ENCODE measurements at regions of chr18 and their contacts with region 1.

Region 1: GRCh38 chr18:36572135-36572856 is 256.5 kb downstream of the TPGS2 start:
- DNase-seq: peak in 1 of 2 donors; percentile 76
- H3K4me3 ChIP-seq: no peak overlapping the region
- H3K27ac ChIP-seq: peak overlapping the region in 1 of 2 donors; percentile 16
- H3K4me1 ChIP-seq: peaks cover 0 to 5% (median 0%) of the 10 kb centered on the region in 4 donors
- H3K27me3 ChIP-seq: no peaks in the 10 kb centered on the region
- CTCF ChIP-seq: peak; percentile 53 to 58

Region 2: DNA sequence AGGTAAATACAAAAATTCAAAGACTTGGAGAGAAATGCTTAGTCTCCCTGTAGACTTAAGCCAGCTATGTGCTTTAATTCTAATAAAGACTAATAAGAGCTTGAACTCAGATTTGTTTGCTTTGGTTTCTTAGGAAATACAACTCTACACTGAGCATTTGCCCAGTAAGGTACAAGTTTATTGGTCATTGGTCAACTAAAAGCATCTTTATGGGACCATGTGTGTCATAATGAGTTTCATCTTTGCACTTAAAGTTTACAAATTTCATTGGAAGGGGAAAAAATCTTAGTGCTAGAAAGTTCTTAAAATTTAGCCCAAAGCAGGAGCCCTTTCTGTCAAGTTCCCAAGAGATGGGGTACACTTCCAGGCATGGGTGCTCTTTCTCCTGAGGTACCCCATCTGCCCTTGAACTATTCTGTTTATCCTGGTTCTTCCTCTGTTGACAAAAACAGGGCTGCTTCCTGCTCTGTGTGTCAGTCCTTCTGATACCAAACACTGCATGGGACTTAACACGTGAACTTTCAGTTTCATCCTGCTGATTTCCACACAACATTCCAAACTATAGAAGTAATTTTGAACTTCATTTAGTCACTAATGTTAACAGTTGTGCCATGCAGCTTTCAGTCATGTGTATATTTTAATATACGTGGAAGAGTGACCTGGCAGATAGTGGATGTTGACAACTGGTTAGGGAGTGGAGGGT is 56.3 kb after region 1 on chr18:
- intact Hi-C with region 1: loop called (anchors 10 kb)
- DNase-seq: no peak
- H3K4me3 ChIP-seq: no peak overlapping the region
- H3K27ac ChIP-seq: peak overlapping the region; percentile 86 to 88
- H3K4me1 ChIP-seq: peaks cover 0 to 41% (median 15%) of the 10 kb centered on the region in 4 donors
- H3K27me3 ChIP-seq: no peaks in the 10 kb centered on the region
- CTCF ChIP-seq: no peak

Measured in tibial artery (tissue), 4 donors.